Natural killer cell (primary cell): ENCODE measurements at regions of chr4 and their contacts with region 1.

Region 1: GRCh38 chr4:88613417-88613875 is 21.2 kb downstream of the HERC3 start:
- DNase-seq: peak in 1 of 2 donors; percentile 84
- ATAC-seq: peak; percentile 91 to 94 (median 93)
- H3K4me3 ChIP-seq: no peak overlapping the region
- H3K4me3 Mint-ChIP-seq: peak overlapping the region; percentile 82
- H3K27ac ChIP-seq: peak overlapping the region; percentile 68
- H3K27ac Mint-ChIP-seq: peak overlapping the region; percentile 91 to 96
- H3K4me1 ChIP-seq: peaks cover 7% of the 10 kb centered on the region
- H3K4me1 Mint-ChIP-seq: peaks cover 50 to 69% of the 10 kb centered on the region in 2 donors
- H3K27me3 ChIP-seq: no peaks in the 10 kb centered on the region
- H3K27me3 Mint-ChIP-seq: no peaks in the 10 kb centered on the region
- CTCF ChIP-seq: no peak

Region 2: GRCh38 chr4:88333741-88334405 is 279.6 kb before region 1 on chr4:
- intact Hi-C with region 1: no loop called
- DNase-seq: no peak
- ATAC-seq: peak in 1 of 3 donors; percentile 28
- H3K4me3 ChIP-seq: no peak overlapping the region
- H3K4me3 Mint-ChIP-seq: no peak overlapping the region
- H3K27ac ChIP-seq: no peak overlapping the region
- H3K27ac Mint-ChIP-seq: no peak overlapping the region
- H3K4me1 ChIP-seq: no peaks in the 10 kb centered on the region
- H3K4me1 Mint-ChIP-seq: peaks cover 7% of the 10 kb centered on the region in 2 donors
- H3K27me3 ChIP-seq: no peaks in the 10 kb centered on the region
- H3K27me3 Mint-ChIP-seq: peaks cover 0 to 6% of the 10 kb centered on the region in 2 donors
- CTCF ChIP-seq: no peak

Region 3: GRCh38 chr4:88591787-88592599 is 21.5 kb before region 1 on chr4 and contains the start of gene HERC3:
- intact Hi-C with region 1: loop called (anchors 2 kb)
- DNase-seq: peak; percentile 91 to 93
- ATAC-seq: peak; percentile 85 to 97 (median 91)
- H3K4me3 ChIP-seq: peak within 1 kb of the TSS; percentile 100
- H3K4me3 Mint-ChIP-seq: peak within 1 kb of the TSS; percentile 96
- H3K27ac ChIP-seq: peak within 1 kb of the TSS; percentile 90
- H3K27ac Mint-ChIP-seq: peak within 1 kb of the TSS; percentile 91 to 97
- H3K4me1 ChIP-seq: peaks cover 6% of the 10 kb centered on the region
- H3K4me1 Mint-ChIP-seq: peaks cover 29 to 30% of the 10 kb centered on the region in 2 donors
- H3K27me3 ChIP-seq: no peaks in the 10 kb centered on the region
- H3K27me3 Mint-ChIP-seq: no peaks in the 10 kb centered on the region
- CTCF ChIP-seq: no peak
- total RNA-seq, gene HERC3: 59.1 to 85.0 (median 61.9) TPM